B cell (primary cell): ENCODE measurements at regions of chr11 and their contacts with region 1.

Region 1: GRCh38 chr11:76598426-76598839 is 72.1 kb downstream of the LRRC32 start:
- DNase-seq: peak; percentile 67
- ATAC-seq: peak; percentile 86
- H3K4me3 ChIP-seq: no peak overlapping the region
- H3K4me3 Mint-ChIP-seq: no peak overlapping the region
- H3K27ac ChIP-seq: no peak overlapping the region
- H3K27ac Mint-ChIP-seq: no peak overlapping the region
- H3K4me1 ChIP-seq: peaks cover 0 to 7% of the 10 kb centered on the region in 2 donors
- H3K4me1 Mint-ChIP-seq: peaks cover 8% of the 10 kb centered on the region
- H3K27me3 ChIP-seq: peaks cover 0 to 16% (median 2%) of the 10 kb centered on the region in 4 experiments
- H3K27me3 Mint-ChIP-seq: peaks cover 32% of the 10 kb centered on the region
- CTCF ChIP-seq: peak; percentile 70

Region 2: DNA sequence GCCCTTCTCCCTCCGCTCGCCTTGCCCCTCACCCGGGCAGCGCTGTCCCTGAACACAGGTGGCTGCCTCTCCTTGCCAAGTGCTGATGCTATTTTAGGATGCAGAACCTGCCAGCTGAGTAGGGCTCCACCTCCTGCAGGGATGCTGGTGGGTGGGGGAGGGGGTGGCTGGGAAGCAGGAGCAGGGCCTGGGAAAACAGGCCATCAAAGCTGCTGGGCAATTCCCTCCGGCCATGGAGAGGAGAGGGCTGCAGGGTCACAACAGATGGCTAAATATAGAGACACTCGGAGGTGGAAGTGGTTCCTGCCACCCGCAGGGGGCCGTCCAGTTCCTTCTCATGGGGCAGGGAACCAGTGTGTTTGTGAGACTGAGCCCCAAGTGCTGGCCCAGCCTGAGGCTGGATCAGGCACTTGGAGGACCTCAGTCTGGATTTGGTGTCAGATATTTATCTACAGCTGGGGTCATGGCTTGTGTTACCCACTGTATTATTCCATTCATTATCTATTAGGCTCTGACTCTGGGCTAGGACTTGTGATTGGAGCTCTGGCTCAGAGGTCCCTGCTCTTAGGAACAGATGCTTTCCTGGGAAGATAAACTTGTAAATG is 12.5 kb after region 1 on chr11:
- CTCF ChIA-PET with region 1: interaction called, 15 read pairs
- POLR2A ChIA-PET with region 1: no interaction called
- intact Hi-C with region 1: no loop called
- DNase-seq: peak; percentile 69
- ATAC-seq: peak; percentile 36
- H3K4me3 ChIP-seq: no peak overlapping the region
- H3K4me3 Mint-ChIP-seq: no peak overlapping the region
- H3K27ac ChIP-seq: no peak overlapping the region
- H3K27ac Mint-ChIP-seq: no peak overlapping the region
- H3K4me1 ChIP-seq: peaks cover 8 to 15% of the 10 kb centered on the region in 2 donors
- H3K4me1 Mint-ChIP-seq: peaks cover 29% of the 10 kb centered on the region
- H3K27me3 ChIP-seq: peaks cover 0 to 37% (median 6%) of the 10 kb centered on the region in 4 experiments
- H3K27me3 Mint-ChIP-seq: peaks cover 42% of the 10 kb centered on the region
- CTCF ChIP-seq: peak; percentile 54

Region 3: DNA sequence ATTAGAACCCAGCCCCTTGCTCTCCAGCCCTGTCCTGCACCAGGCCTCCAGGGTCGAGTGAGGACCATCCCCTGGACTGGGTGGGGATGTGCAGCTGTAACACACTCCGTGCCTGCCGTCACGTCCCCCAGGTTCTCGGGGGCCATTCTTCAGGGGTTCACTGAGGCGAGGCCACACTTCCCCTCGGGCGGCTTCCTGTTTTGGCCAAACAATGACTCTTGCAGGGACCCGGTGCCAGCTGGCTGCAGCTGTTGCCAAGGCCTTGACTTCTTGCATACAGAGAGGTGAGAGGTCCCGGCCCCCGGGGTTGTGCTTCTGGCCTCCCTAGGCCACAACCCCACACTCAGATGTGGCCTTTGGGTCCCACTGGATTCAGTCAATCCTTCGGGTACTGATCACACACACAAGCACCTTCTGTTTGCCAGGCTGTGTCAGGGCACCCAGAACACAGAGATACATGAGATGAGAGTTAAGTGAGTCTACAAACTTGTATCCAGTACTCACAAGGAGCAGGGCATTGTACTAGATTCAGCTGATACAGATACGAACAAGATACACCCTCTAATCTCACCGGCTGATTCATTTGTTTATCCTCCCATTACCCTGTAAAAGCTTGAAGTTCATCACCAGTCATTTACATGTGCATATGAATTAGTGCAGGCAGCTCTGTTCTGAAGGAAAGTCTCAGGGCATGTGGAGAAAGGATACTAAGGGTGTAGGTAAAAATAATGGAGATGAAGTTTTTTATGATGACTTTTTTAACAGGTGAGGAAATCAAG is 39.2 kb after region 1 on chr11:
- CTCF ChIA-PET with region 1: interaction called, 14 read pairs
- POLR2A ChIA-PET with region 1: interaction called, 3 read pairs
- intact Hi-C with region 1: no loop called
- DNase-seq: peak; percentile 91
- ATAC-seq: peak; percentile 92
- H3K4me3 ChIP-seq: peak overlapping the region in 2 of 5 experiments; percentile 25 to 35
- H3K4me3 Mint-ChIP-seq: peak overlapping the region; percentile 78
- H3K27ac ChIP-seq: peak overlapping the region; percentile 50 to 72
- H3K27ac Mint-ChIP-seq: peak overlapping the region; percentile 93
- H3K4me1 ChIP-seq: peaks cover 53 to 55% of the 10 kb centered on the region in 2 donors
- H3K4me1 Mint-ChIP-seq: peaks cover 69% of the 10 kb centered on the region
- H3K27me3 ChIP-seq: no peaks in the 10 kb centered on the region
- H3K27me3 Mint-ChIP-seq: peaks cover 18% of the 10 kb centered on the region
- CTCF ChIP-seq: no peak

Region 4: GRCh38 chr11:76664578-76665061 is 66.2 kb after region 1 on chr11:
- CTCF ChIA-PET with region 1: interaction called, 18 read pairs
- POLR2A ChIA-PET with region 1: no interaction called
- intact Hi-C with region 1: no loop called
- DNase-seq: peak; percentile 63
- ATAC-seq: peak; percentile 63
- H3K4me3 ChIP-seq: peak overlapping the region in 1 of 5 experiments; percentile 11
- H3K4me3 Mint-ChIP-seq: peak overlapping the region; percentile 44
- H3K27ac ChIP-seq: peak overlapping the region in 1 of 2 donors; percentile 27
- H3K27ac Mint-ChIP-seq: peak overlapping the region; percentile 75
- H3K4me1 ChIP-seq: peaks cover 55 to 58% of the 10 kb centered on the region in 2 donors
- H3K4me1 Mint-ChIP-seq: peaks cover 57% of the 10 kb centered on the region
- H3K27me3 ChIP-seq: peaks cover 0 to 39% (median 20%) of the 10 kb centered on the region in 4 experiments
- H3K27me3 Mint-ChIP-seq: peaks cover 67% of the 10 kb centered on the region
- CTCF ChIP-seq: no peak

Region 5: DNA sequence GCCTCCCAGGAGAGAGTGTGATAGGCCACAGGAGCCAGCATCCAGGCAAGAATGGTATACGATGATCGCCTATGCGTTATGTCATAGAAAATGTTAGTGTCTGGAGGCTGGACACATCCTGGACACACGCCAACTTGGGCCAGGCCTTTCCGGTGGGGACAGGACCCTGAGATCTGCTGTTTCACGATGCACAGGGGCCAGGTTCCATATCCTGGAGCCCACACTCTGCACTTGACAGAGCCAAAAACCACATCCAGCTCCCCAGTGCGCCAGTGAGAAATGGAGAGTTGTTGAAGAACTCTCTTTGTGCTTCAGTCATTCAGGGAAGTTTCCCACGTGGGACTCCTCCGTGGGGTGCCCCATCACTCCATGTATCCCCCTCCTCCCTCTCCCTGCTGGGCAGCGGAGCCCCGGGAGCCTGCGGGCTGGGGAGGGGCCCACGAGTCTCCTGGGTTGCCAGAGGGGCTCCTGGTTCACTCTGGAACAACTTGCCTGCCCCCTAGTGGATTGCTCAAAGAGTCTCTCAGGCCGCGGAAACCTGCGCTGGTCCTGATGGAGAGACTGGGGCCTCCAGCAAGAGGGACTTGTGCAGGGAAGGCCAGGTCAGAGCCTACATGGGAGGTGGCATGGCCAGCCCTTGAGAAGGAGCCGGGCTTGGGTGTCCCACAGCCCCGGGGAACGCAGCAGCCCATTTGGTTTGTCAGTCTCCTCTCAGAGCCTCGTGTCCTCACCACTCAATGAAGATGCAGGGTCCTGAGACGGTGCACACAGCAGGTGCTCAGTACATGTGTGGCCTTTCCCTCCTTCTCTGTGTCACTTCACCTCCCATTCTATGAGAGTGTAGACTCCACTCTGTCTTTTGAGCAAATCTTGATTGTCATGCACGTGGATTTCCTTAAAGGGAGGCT is 82.3 kb after region 1 on chr11:
- CTCF ChIA-PET with region 1: interaction called, 224 read pairs
- POLR2A ChIA-PET with region 1: no interaction called
- intact Hi-C with region 1: loop called (anchors 1 kb)
- DNase-seq: peak; percentile 85
- ATAC-seq: peak; percentile 80
- H3K4me3 ChIP-seq: no peak overlapping the region
- H3K4me3 Mint-ChIP-seq: no peak overlapping the region
- H3K27ac ChIP-seq: no peak overlapping the region
- H3K27ac Mint-ChIP-seq: no peak overlapping the region
- H3K4me1 ChIP-seq: peaks cover 28 to 29% of the 10 kb centered on the region in 2 donors
- H3K4me1 Mint-ChIP-seq: peaks cover 43% of the 10 kb centered on the region
- H3K27me3 ChIP-seq: peaks cover 0 to 70% (median 20%) of the 10 kb centered on the region in 4 experiments
- H3K27me3 Mint-ChIP-seq: peaks cover 72% of the 10 kb centered on the region
- CTCF ChIP-seq: peak; percentile 93

Region 6: DNA sequence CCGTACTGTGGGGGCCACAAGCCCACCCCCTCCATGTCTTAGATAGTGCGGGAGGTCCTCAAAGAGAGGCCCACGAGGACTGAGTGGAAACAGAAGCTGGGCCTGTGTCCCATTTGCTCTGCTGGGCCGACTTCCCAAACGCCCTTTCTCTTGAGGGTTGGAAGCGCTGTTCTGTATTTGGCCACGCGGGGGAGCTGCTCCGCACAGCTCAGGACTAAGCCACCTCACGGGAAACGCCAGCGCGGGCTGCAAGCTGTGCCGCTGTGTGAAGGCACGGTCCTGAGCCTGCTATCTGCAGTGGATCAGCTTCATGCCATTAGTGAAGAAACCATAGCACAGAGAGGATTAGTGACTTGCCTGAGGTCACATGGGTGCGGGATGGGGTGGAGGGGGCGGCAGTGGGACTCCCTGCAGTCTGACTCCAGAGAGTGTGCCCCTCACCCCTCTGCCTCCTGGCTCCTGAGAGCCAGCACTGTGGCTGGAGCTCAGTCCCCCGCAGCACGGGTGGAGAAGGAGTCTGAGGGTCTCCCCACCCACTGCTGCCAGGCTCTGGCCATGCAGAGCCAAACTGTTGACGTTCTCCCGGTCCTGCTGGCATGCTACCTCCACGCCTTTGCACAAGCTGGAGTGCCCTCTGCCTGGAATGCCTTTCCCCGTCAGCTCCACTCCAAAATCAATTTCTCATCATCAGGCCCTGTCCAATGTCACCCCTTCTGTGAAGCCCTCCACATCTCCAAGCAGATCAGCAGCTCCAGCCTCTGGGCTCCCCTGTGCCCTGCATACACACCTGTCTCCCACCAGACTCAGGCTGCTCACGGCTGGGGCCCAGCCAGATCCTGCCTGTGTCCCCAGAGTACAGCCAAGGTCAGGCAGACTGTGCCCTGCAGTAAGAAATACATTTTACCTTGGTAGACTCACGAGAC is 123.6 kb after region 1 on chr11:
- CTCF ChIA-PET with region 1: interaction called, 19 read pairs
- POLR2A ChIA-PET with region 1: no interaction called
- intact Hi-C with region 1: no loop called
- DNase-seq: peak; percentile 77
- ATAC-seq: peak; percentile 76
- H3K4me3 ChIP-seq: no peak overlapping the region
- H3K4me3 Mint-ChIP-seq: no peak overlapping the region
- H3K27ac ChIP-seq: no peak overlapping the region
- H3K27ac Mint-ChIP-seq: no peak overlapping the region
- H3K4me1 ChIP-seq: peaks cover 5 to 8% of the 10 kb centered on the region in 2 donors
- H3K4me1 Mint-ChIP-seq: peaks cover 7% of the 10 kb centered on the region
- H3K27me3 ChIP-seq: peaks cover 0 to 28% (median 10%) of the 10 kb centered on the region in 4 experiments
- H3K27me3 Mint-ChIP-seq: peaks cover 42% of the 10 kb centered on the region
- CTCF ChIP-seq: peak; percentile 88